GM12878 (cell line): ENCODE measurements at regions of chr13 and their contacts with region 1.

Region 1: GRCh38 chr13:28237944-28238343 is 99.6 kb downstream of the PAN3 start:
- DNase-seq: no peak
- ATAC-seq: no peak
- H3K4me3 ChIP-seq: no peak overlapping the region
- H3K27ac ChIP-seq: no peak overlapping the region
- H3K4me1 ChIP-seq: no peaks in the 10 kb centered on the region
- H3K27me3 ChIP-seq: no peaks in the 10 kb centered on the region
- CTCF ChIP-seq: no peak
- EP300 ChIP-seq: no peak
- POLR2A ChIP-seq: no peak
- RAD21 ChIP-seq: no peak

Region 2: DNA sequence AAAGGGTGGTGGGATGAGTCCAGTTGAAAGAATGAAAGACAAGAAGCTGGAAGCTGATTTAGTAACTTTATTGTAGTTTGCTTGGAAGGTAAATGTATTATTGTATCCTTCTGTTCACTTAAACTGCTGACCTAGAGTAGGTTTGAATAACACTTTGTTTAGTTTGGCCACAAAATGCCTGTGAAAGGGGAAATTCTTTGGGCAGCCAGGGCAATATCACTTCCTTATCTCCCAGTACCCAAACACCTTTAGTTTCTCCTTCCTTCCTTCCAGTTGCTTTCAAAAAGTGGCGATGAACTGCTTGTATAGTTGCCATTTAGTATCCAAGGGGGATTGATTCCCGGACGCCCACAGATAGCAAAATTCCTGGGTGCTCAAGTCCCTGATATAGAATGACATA is 20.5 kb after region 1 on chr13:
- CTCF ChIA-PET with region 1: interaction called, 4 read pairs
- POLR2A ChIA-PET with region 1: no interaction called
- RAD21 ChIA-PET with region 1: no interaction called
- SMC1A ChIA-PET with region 1: interaction called, 11 read pairs
- in situ Hi-C with region 1: no loop called
- intact Hi-C with region 1: no loop called
- DNase-seq: no peak
- ATAC-seq: no peak
- H3K4me3 ChIP-seq: no peak overlapping the region
- H3K27ac ChIP-seq: no peak overlapping the region
- H3K4me1 ChIP-seq: no peaks in the 10 kb centered on the region; the same call in 1 of the 2 replicates
- H3K27me3 ChIP-seq: no peaks in the 10 kb centered on the region
- CTCF ChIP-seq: no peak
- EP300 ChIP-seq: no peak
- POLR2A ChIP-seq: no peak
- RAD21 ChIP-seq: no peak